Naive thymus-derived CD4-positive, alpha-beta T cell (primary cell): ENCODE measurements at regions of chr22 and their contacts with region 1.

Region 1: DNA sequence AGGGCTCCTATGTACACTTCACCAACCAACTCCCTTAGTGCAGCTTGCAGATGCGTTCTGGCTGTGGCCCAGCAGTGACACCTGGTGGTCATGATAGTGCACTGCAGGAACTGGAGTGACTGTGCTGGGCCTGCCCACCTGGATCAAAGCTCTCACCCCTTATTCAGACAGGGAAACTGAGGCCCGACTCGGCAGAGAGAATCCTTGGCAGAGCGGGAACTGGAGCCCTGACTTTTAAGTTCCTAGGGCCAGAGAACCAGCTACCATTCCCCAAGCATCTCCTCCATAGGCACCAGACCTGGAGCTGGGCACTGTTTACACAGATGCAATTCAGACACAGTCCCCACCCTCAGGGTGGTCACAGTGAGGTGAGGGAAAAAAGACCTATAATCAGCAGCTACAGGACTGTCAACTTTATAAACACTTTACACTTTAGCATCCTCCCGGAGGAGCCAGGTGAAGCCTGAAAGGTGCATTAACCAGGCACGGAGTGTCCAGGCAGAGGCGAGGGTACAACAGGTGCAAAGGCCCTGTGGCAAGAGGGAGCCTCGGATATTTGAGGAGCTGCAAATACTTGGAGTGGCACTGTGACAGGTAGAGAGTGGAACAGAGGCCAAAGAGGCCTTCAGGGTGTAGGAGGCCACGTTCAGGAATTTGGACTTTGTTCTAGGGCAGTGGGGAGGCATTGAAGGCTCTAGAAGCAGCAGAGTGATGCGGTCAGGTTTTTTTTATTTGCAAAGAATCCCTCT is 22.0 kb downstream of the RHBDD3 start:
- DNase-seq: peak; percentile 31 to 68 (median 58)
- ATAC-seq: peak; percentile 95
- H3K4me3 ChIP-seq: no peak overlapping the region
- H3K4me3 Mint-ChIP-seq: no peak overlapping the region
- H3K27ac ChIP-seq: no peak overlapping the region
- H3K27ac Mint-ChIP-seq: peak overlapping the region in 1 of 9 donors; percentile 58
- H3K4me1 ChIP-seq: no peaks in the 10 kb centered on the region
- H3K4me1 Mint-ChIP-seq: peaks cover 0 to 4% (median 0%) of the 10 kb centered on the region in 7 donors
- H3K27me3 ChIP-seq: no peaks in the 10 kb centered on the region
- H3K27me3 Mint-ChIP-seq: peaks cover 5 to 23% (median 10%) of the 10 kb centered on the region in 5 donors

Region 2: GRCh38 chr22:28791841-28792490 is 453.8 kb before region 1 on chr22:
- CTCF ChIA-PET with region 1: no interaction called
- POLR2A ChIA-PET with region 1: no interaction called
- intact Hi-C with region 1: loop called in 1 of 2 experiments (anchors 2 kb)
- DNase-seq: no peak
- ATAC-seq: peak; percentile 23
- H3K4me3 ChIP-seq: no peak overlapping the region
- H3K4me3 Mint-ChIP-seq: peak overlapping the region in 5 of 10 donors; percentile 10 to 40 (median 34)
- H3K27ac ChIP-seq: no peak overlapping the region
- H3K27ac Mint-ChIP-seq: peak overlapping the region; percentile 12 to 97 (median 63)
- H3K4me1 ChIP-seq: peaks cover 22 to 34% of the 10 kb centered on the region in 2 donors
- H3K4me1 Mint-ChIP-seq: peaks cover 38 to 74% (median 66%) of the 10 kb centered on the region in 7 donors
- H3K27me3 ChIP-seq: no peaks in the 10 kb centered on the region
- H3K27me3 Mint-ChIP-seq: no peaks in the 10 kb centered on the region

Region 3: DNA sequence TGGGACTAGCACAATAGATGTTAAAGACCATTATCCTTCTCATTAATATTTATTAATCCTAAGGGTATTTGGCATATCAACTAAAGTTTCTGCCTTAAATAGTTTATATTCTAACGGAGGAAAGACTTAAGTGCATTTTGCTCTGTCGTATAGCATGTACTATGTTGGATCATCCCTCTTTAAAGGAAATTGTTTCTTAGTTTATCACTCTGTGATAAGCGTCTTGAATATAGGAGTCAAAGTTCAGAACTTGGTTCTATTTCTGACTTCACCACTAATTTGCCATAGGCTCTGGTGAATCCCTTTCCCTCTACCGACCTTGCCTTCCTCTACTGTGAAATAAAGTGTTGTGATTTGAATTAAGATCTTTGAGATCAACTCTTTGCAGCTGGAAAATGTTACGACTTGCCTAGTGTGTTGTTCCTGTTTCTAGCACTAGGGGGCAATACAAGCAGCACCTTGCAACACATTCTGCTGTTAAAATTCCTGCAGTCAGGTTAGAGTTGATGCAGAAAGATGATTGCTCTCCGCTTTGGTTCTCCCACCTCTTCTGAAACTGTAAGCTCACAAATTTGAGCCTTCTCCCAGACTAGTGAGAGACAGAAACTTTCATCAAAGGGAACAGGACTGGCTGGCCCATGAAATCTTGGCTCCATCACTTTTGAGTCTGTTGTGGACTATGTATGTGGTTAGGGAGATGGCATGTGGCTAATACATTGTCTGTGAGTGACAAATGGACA is 390.3 kb before region 1 on chr22:
- CTCF ChIA-PET with region 1: no interaction called
- POLR2A ChIA-PET with region 1: no interaction called
- intact Hi-C with region 1: loop called in 1 of 2 experiments (anchors 1 kb)
- DNase-seq: peak in 8 of 9 donors; percentile 29 to 70 (median 58)
- ATAC-seq: peak; percentile 68
- H3K4me3 ChIP-seq: no peak overlapping the region
- H3K4me3 Mint-ChIP-seq: no peak overlapping the region
- H3K27ac ChIP-seq: no peak overlapping the region
- H3K27ac Mint-ChIP-seq: no peak overlapping the region
- H3K4me1 ChIP-seq: no peaks in the 10 kb centered on the region
- H3K4me1 Mint-ChIP-seq: no peaks in the 10 kb centered on the region
- H3K27me3 ChIP-seq: no peaks in the 10 kb centered on the region
- H3K27me3 Mint-ChIP-seq: peaks cover 3 to 18% (median 5%) of the 10 kb centered on the region in 5 donors

Region 4: GRCh38 chr22:29154364-29155048 is 91.3 kb before region 1 on chr22:
- CTCF ChIA-PET with region 1: no interaction called
- POLR2A ChIA-PET with region 1: no interaction called
- intact Hi-C with region 1: loop called in 1 of 2 experiments (anchors 1 kb)
- DNase-seq: peak; percentile 21 to 82 (median 58)
- ATAC-seq: peak; percentile 82
- H3K4me3 ChIP-seq: no peak overlapping the region
- H3K4me3 Mint-ChIP-seq: peak overlapping the region in 8 of 10 donors; percentile 25 to 68 (median 56)
- H3K27ac ChIP-seq: no peak overlapping the region
- H3K27ac Mint-ChIP-seq: no peak overlapping the region
- H3K4me1 ChIP-seq: no peaks in the 10 kb centered on the region
- H3K4me1 Mint-ChIP-seq: peaks cover 7 to 18% (median 8%) of the 10 kb centered on the region in 7 donors
- H3K27me3 ChIP-seq: no peaks in the 10 kb centered on the region
- H3K27me3 Mint-ChIP-seq: peaks cover 18 to 34% (median 26%) of the 10 kb centered on the region in 5 donors